ENCODE measurements at regions of chr2 and their contacts with region 1.

Region 1: GRCh38 chr2:41698678-41699422 is 349.0 kb upstream of the PKDCC start:
- DNase-seq: no peak
- H3K4me3 Mint-ChIP-seq: no peak overlapping the region
- H3K27ac Mint-ChIP-seq: no peak overlapping the region
- H3K4me1 Mint-ChIP-seq: no peaks in the 10 kb centered on the region
- H3K27me3 Mint-ChIP-seq: peaks cover 2% of the 10 kb centered on the region

Region 2: GRCh38 chr2:41111836-41112627 is 586.8 kb before region 1 on chr2:
- intact Hi-C with region 1: no loop called
- DNase-seq: no peak
- H3K4me3 Mint-ChIP-seq: no peak overlapping the region
- H3K27ac Mint-ChIP-seq: no peak overlapping the region
- H3K4me1 Mint-ChIP-seq: no peaks in the 10 kb centered on the region
- H3K27me3 Mint-ChIP-seq: no peaks in the 10 kb centered on the region

Region 3: DNA sequence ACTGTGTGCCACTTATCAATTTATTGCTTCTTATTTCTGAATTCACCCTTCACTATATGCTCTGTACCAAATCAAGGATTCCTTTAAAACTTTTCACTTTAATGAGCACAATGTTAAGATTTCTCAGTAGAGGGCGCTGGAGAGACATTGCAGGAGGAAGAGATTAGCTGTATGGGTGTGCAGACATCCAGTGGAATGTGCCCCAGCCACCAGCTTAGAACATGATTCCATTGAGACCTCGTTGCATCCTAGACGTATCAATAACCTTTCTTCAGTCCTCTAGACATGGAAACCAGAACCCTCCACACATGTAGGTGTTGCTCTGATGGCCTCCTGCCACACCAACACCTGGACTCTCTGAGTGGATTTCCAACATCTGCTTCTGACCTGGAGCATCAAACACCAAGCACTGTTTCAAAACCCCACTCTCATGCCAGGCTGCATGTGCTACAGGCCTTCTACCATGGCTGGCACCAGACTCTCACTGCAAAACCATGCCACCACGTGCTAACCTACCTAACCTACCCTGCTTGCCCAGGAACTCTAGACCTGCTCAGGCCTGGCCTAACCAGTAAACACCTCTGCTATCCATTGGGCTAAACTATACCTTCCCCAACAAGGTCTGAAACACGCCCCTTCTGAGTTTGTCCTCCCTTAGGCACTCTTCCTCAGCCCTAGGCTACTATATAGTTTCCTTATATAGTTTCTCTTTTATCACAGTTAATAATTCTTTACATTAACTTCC is 284.2 kb before region 1 on chr2:
- intact Hi-C with region 1: loop called (anchors 5 kb)
- DNase-seq: peak; percentile 54
- H3K4me3 Mint-ChIP-seq: no peak overlapping the region
- H3K27ac Mint-ChIP-seq: no peak overlapping the region
- H3K4me1 Mint-ChIP-seq: no peaks in the 10 kb centered on the region
- H3K27me3 Mint-ChIP-seq: peaks cover 2% of the 10 kb centered on the region

Measured in activated CD4-positive, alpha-beta T cell treated with anti-CD3 and anti-CD28 coated beads, Interleukin-2, amount 10 ng/mL, durations not matched to agents 24 days and 14 days (primary cell).